Activated naive CD8-positive, alpha-beta T cell treated with anti-CD3 and anti-CD28 coated beads, Interleukin-2, amount 10 ng/mL, durations not matched to agents 7 days and 5 days (primary cell): ENCODE measurements at regions of chr17 and their contacts with region 1.

Region 1: GRCh38 chr17:76271669-76272540 is 6.8 kb downstream of the UBALD2 start:
- DNase-seq: peak; percentile 88
- ATAC-seq: peak; percentile 61
- H3K4me3 Mint-ChIP-seq: peak overlapping the region; percentile 87
- H3K27ac Mint-ChIP-seq: peak overlapping the region; percentile 96
- H3K4me1 Mint-ChIP-seq: peaks cover 55% of the 10 kb centered on the region
- H3K27me3 Mint-ChIP-seq: no peaks in the 10 kb centered on the region

Region 2: GRCh38 chr17:76103274-76104139 is 168.4 kb before region 1 on chr17 and contains the start of gene EXOC7:
- POLR2A ChIA-PET with region 1: interaction called, 18 read pairs
- DNase-seq: peak; percentile 98
- ATAC-seq: peak; percentile 88
- H3K4me3 Mint-ChIP-seq: peak within 1 kb of the TSS; percentile 99
- H3K27ac Mint-ChIP-seq: peak within 1 kb of the TSS; percentile 98
- H3K4me1 Mint-ChIP-seq: peaks cover 16% of the 10 kb centered on the region
- H3K27me3 Mint-ChIP-seq: no peaks in the 10 kb centered on the region
- total RNA-seq, gene EXOC7: 163 to 164 TPM

Region 3: DNA sequence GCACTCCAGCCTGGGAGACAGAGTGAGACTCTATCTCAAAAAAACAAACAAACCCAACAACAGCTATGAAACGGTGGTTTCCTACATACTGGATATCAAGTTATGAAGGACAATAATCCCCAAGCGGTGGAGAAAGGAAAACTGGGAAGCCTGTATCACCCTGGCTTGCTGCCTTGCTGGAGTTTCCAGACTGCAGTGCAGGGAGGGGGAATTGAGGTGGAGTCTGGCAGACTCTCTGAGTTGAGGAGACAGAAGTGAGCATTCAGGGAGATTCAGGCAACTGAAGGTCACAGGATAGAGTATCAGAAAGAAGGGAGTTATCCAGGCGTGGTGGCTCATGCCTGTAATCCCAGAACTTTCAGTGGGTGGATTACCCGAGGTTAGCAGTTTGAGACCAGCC is 24.3 kb after region 1 on chr17:
- POLR2A ChIA-PET with region 1: no interaction called
- DNase-seq: no peak
- ATAC-seq: no peak
- H3K4me3 Mint-ChIP-seq: no peak overlapping the region
- H3K27ac Mint-ChIP-seq: no peak overlapping the region
- H3K4me1 Mint-ChIP-seq: peaks cover 3% of the 10 kb centered on the region
- H3K27me3 Mint-ChIP-seq: no peaks in the 10 kb centered on the region